Natural killer cell (primary cell): ENCODE measurements at regions of chr10 and their contacts with region 1.

Region 1: DNA sequence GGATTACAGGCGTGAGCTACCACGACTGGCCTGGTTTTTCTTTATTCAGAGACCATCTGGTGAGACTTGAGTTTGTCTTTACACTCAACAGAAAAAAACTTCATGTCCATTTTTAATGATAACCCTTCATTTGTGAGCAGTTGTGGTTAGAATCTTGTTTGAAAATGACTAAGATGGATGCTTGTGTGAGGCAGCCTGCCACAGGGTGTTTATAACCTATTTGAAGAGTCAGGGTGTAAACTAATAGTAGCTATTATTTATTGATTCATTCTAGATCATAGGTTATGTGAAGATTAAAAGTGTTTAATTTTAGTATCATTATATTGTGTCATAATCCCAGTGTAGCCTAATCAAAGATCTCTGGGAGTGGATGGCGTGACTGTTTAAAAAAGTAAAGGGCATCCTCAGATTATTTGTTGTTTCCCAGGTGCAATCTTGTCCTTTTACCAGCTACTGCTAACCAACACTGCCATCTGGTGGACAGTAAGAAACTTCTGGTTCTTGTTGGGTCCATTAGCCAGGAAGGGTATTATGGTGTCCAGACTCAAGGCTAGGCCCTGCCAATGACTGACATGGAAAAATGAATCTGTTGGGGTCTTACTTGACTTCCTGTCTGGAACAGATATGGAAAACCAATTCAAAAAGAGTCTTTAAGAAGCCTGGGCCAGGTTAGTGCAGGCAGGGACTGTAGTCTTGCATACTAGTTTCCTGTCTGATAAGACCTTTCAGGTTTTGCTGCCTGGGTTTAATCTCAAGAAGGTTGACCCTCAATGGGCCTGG is 24.9 kb downstream of the NRBF2 start:
- DNase-seq: peak in 1 of 2 donors; percentile 92
- ATAC-seq: peak; percentile 75 to 86 (median 78)
- H3K4me3 ChIP-seq: no peak overlapping the region
- H3K4me3 Mint-ChIP-seq: no peak overlapping the region
- H3K27ac ChIP-seq: no peak overlapping the region
- H3K27ac Mint-ChIP-seq: no peak overlapping the region
- H3K4me1 ChIP-seq: no peaks in the 10 kb centered on the region
- H3K4me1 Mint-ChIP-seq: peaks cover 12 to 22% of the 10 kb centered on the region in 2 donors
- H3K27me3 ChIP-seq: no peaks in the 10 kb centered on the region
- H3K27me3 Mint-ChIP-seq: no peaks in the 10 kb centered on the region
- CTCF ChIP-seq: peak; percentile 82

Region 2: DNA sequence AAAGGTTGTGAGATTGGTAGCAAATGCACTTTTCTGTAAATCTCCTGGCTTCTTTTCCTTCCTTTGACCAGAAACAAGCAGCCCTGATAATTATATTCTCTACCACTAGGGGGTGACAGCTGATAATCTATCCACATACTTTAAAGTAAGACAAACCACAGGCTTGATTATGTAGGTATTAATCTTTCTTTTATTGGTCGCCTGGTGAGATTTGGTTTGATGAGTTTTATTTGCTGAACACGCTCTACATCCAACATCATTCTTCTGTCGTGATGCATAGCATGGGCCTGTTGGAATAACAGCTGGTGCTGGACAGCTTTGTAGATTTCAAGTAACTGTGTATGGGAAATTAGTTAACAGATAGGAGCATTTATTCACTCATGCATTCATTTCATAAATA is 720.3 kb before region 1 on chr10:
- intact Hi-C with region 1: loop called (anchors 1 kb)
- DNase-seq: peak in 1 of 2 donors; percentile 77
- ATAC-seq: peak; percentile 73 to 82 (median 76)
- H3K4me3 ChIP-seq: no peak overlapping the region
- H3K4me3 Mint-ChIP-seq: no peak overlapping the region
- H3K27ac ChIP-seq: no peak overlapping the region
- H3K27ac Mint-ChIP-seq: no peak overlapping the region
- H3K4me1 ChIP-seq: no peaks in the 10 kb centered on the region
- H3K4me1 Mint-ChIP-seq: peaks cover 5% of the 10 kb centered on the region in 2 donors
- H3K27me3 ChIP-seq: peaks cover 4% of the 10 kb centered on the region
- H3K27me3 Mint-ChIP-seq: peaks cover 4 to 11% of the 10 kb centered on the region in 2 donors
- CTCF ChIP-seq: peak; percentile 85

Region 3: GRCh38 chr10:62594093-62594520 is 563.9 kb before region 1 on chr10:
- intact Hi-C with region 1: loop called (anchors 1 kb)
- DNase-seq: peak; percentile 35 to 75
- ATAC-seq: peak; percentile 67 to 95 (median 87)
- H3K4me3 ChIP-seq: no peak overlapping the region
- H3K4me3 Mint-ChIP-seq: no peak overlapping the region
- H3K27ac ChIP-seq: no peak overlapping the region
- H3K27ac Mint-ChIP-seq: no peak overlapping the region
- H3K4me1 ChIP-seq: no peaks in the 10 kb centered on the region
- H3K4me1 Mint-ChIP-seq: peaks cover 6% of the 10 kb centered on the region in 2 donors
- H3K27me3 ChIP-seq: no peaks in the 10 kb centered on the region
- H3K27me3 Mint-ChIP-seq: peaks cover 0 to 12% of the 10 kb centered on the region in 2 donors
- CTCF ChIP-seq: peak; percentile 92

Region 4: GRCh38 chr10:62610649-62611229 is 547.3 kb before region 1 on chr10:
- intact Hi-C with region 1: loop called (anchors 5 kb)
- DNase-seq: peak; percentile 56 to 86
- ATAC-seq: peak; percentile 85 to 96 (median 88)
- H3K4me3 ChIP-seq: no peak overlapping the region
- H3K4me3 Mint-ChIP-seq: no peak overlapping the region
- H3K27ac ChIP-seq: no peak overlapping the region
- H3K27ac Mint-ChIP-seq: no peak overlapping the region
- H3K4me1 ChIP-seq: peaks cover 11% of the 10 kb centered on the region
- H3K4me1 Mint-ChIP-seq: peaks cover 20 to 23% of the 10 kb centered on the region in 2 donors
- H3K27me3 ChIP-seq: no peaks in the 10 kb centered on the region
- H3K27me3 Mint-ChIP-seq: no peaks in the 10 kb centered on the region
- CTCF ChIP-seq: peak; percentile 96

Region 5: DNA sequence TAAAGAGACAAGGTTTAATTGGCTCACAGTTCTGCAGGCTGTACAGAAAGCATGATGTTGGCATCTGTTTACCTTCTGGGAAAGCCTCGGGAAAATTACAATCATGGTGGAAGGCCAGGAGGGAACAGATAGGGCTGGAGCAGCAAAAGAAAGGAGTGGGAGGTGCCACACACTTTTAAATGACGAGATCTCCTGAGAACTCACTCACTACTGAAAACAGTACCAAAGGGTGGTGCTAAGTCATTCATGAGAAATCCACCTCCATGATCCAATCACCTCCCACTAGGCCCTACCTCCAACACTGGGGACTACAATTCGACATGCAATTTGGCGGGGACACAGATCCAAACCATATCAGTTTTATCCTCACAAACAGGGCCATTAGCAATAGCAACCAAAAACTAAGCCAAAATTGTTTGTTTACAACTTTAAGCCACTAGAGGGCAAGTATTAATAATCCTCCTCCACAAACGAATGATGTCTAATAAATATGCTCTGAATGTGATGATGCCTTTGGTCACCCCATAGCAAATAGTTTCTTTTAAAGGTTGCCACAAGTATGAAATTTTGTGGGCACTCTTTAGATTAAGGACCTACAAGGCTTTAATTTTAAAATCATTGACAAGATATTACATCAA is 154.1 kb before region 1 on chr10:
- intact Hi-C with region 1: loop called (anchors 2 kb)
- DNase-seq: peak in 1 of 2 donors; percentile 10
- ATAC-seq: no peak
- H3K4me3 ChIP-seq: no peak overlapping the region
- H3K4me3 Mint-ChIP-seq: no peak overlapping the region
- H3K27ac ChIP-seq: no peak overlapping the region
- H3K27ac Mint-ChIP-seq: no peak overlapping the region
- H3K4me1 ChIP-seq: no peaks in the 10 kb centered on the region
- H3K4me1 Mint-ChIP-seq: no peaks in the 10 kb centered on the region
- H3K27me3 ChIP-seq: peaks cover 2% of the 10 kb centered on the region
- H3K27me3 Mint-ChIP-seq: peaks cover 13 to 27% of the 10 kb centered on the region in 2 donors
- CTCF ChIP-seq: peak; percentile 31

Region 6: GRCh38 chr10:64312876-64313275 is 1154.8 kb after region 1 on chr10:
- intact Hi-C with region 1: no loop called
- DNase-seq: no peak
- ATAC-seq: no peak
- H3K4me3 ChIP-seq: no peak overlapping the region
- H3K4me3 Mint-ChIP-seq: no peak overlapping the region
- H3K27ac ChIP-seq: no peak overlapping the region
- H3K27ac Mint-ChIP-seq: no peak overlapping the region
- H3K4me1 ChIP-seq: no peaks in the 10 kb centered on the region
- H3K4me1 Mint-ChIP-seq: no peaks in the 10 kb centered on the region
- H3K27me3 ChIP-seq: no peaks in the 10 kb centered on the region
- H3K27me3 Mint-ChIP-seq: no peaks in the 10 kb centered on the region
- CTCF ChIP-seq: no peak